GM12878 (cell line): ENCODE measurements at regions of chr2 and their contacts with region 1.

Region 1: DNA sequence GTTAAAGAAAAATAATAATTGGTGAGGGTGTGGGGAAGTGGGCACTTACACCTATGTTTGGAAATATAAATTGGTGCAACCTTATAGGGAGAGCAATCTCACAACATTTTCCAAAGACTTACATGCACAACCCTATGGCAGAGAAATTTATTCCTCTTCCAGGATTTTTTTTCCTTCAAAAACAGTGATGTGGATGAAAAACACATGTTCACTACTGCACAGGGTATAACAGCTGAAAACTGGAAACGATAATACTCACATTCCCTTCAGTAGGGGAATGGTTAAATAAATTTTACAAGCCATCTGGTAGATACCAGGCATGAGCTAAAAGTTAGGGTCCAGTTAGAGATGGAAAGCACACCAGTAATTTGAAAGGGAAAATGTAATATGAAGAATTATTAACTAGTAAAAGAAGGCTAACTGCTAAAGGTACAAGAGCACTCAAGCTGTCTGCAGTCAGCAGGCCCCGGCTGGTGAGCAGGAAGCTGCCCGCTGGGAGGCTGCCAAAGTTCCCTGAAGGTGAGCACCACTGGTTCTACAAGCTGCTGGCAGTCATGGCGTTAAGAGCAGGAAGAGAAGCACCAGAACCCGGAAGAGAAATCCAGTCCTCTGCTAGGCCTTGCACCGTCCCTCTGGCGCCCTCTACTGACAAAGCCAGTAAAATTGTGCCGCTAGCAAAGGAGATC is 28.4 kb upstream of the CASP8 start:
- DNase-seq: peak; percentile 80
- ATAC-seq: peak; percentile 72
- H3K4me3 ChIP-seq: no peak overlapping the region
- H3K27ac ChIP-seq: peak overlapping the region; percentile 55
- H3K4me1 ChIP-seq: peaks cover 20% of the 10 kb centered on the region
- H3K27me3 ChIP-seq: no peaks in the 10 kb centered on the region
- CTCF ChIP-seq: peak; percentile 92 to 98 (median 95); a peak in 5 of 6 replicates
- EP300 ChIP-seq: no peak
- POLR2A ChIP-seq: peak; percentile 76
- RAD21 ChIP-seq: peak; percentile 98

Region 2: DNA sequence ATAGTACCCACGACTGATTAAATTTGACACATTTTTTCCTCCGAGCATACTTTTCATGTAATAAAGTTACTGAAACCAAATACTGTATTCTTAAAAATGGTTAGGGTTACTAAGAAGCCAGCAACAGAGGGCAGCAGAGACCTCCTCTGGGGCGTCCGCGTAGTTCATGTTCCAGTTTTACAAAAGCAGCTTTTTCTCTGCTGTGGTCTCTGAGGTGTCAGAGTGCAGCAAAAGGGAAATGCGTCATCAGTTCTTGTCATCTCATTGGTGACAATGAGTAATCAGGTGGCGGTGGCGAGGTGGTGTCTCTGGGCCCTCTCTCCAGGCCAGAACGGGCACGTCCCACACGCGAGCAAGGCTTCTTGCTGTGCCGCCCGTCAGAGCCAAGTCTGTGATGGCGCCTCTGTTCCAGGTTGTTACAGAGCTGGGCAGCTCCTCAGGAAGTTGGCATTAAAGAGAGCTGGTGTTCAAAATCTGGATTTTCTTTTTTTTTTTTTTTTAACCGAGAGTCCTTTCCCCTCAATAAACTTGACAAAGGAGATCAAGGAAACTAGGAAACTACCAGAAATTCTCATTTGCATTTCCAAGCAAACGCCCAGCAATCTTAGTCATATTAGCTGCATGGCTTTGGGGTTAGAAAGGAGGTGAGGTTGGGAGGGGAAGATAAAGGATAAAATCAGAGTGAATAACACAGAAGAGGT is 518.8 kb before region 1 on chr2:
- CTCF ChIA-PET with region 1: interaction called, 24 read pairs
- POLR2A ChIA-PET with region 1: interaction called, 3 read pairs
- RAD21 ChIA-PET with region 1: interaction called, 12 read pairs
- SMC1A ChIA-PET with region 1: interaction called, 11 read pairs
- in situ Hi-C with region 1: no loop called
- intact Hi-C with region 1: loop called (anchors 5 kb)
- DNase-seq: peak; percentile 98
- ATAC-seq: peak; percentile 99
- H3K4me3 ChIP-seq: no peak overlapping the region
- H3K27ac ChIP-seq: peak overlapping the region; percentile 82
- H3K4me1 ChIP-seq: peaks cover 7% of the 10 kb centered on the region
- H3K27me3 ChIP-seq: no peaks in the 10 kb centered on the region
- CTCF ChIP-seq: peak; percentile 75 to 94 (median 80)
- EP300 ChIP-seq: peak; percentile 85 to 94; a peak in 3 of 4 replicates
- POLR2A ChIP-seq: peak; percentile 98
- RAD21 ChIP-seq: peak; percentile 95

Region 3: DNA sequence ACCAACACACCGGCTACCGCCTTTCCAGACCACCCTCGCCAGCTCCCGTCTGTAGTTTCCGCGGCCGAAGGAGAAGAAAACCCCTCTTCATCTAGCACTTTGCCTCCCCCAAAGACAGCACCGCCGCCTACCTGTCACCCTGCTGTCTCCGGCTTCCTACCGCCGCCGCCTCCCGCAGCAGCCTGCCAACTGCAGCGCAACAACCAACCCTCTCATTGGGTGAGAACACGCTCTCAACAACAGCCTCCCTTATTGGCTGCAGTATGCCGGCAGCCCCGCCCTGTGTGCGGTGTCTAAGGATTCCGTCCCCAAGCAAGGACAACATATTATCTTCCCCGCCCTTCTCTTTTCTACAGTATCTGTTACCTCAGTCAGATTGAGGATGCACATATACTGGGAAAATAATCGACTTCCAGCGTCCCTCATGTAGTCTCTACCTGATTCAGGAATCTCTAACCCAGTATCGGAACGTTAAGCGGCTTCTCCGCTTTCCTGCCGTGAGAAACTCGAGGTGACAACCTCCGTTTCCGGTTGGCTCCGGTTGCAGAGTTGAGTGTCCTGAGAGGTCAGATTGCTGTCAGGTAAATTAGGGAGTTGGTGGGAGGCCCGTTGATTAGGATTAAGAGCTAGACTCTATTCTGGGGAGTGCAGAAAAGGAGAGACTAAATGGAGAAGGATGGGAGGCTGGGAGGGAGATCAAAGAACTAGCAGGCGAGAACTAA is 160.3 kb before region 1 on chr2 and contains the starts of genes HYCC2 and NDUFB3:
- CTCF ChIA-PET with region 1: interaction called, 25 read pairs
- POLR2A ChIA-PET with region 1: no interaction called
- RAD21 ChIA-PET with region 1: interaction called, 36 read pairs
- SMC1A ChIA-PET with region 1: interaction called, 35 read pairs
- in situ Hi-C with region 1: no loop called
- intact Hi-C with region 1: loop called (anchors 1 kb)
- DNase-seq: peak; percentile 95
- ATAC-seq: peak; percentile 97
- H3K4me3 ChIP-seq: peak within 1 kb of the TSS; percentile 80
- H3K27ac ChIP-seq: peak within 1 kb of the TSS; percentile 92
- H3K4me1 ChIP-seq: peaks cover 23% of the 10 kb centered on the region
- H3K27me3 ChIP-seq: no peaks in the 10 kb centered on the region
- CTCF ChIP-seq: peak in 2 of 3 experiments; percentile 28 to 43; a peak in 3 of 6 replicates
- EP300 ChIP-seq: 0 out of 4 replicates have a peak, but pooled peaks of 1 of the 2 experiments have one; percentile 13
- POLR2A ChIP-seq: peak; percentile 91
- RAD21 ChIP-seq: no peak
- polyA plus RNA-seq, gene HYCC2: 3.4 to 6.8 TPM
- polyA plus RNA-seq, gene NDUFB3: 1,005 to 1,059 TPM

Region 4: DNA sequence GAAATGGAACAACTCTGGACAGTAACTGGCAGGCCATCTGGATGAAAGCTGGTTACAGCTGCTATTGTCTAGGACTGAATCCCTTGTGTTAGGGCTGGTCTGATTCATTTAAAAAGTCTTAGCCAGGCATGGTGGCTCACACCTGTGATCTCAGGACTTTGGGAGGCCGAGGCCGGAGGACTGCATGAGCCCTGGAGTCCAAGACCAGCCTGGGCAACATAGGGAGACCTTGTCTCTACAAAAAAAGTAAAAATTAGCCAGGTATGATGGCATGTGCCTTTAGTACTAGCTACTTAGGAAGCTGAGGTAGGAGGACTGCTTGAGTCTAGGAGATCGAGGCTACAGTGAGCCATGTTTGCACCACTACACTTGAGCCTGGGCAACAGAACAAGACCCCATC is 131.4 kb before region 1 on chr2:
- CTCF ChIA-PET with region 1: no interaction called
- POLR2A ChIA-PET with region 1: no interaction called
- RAD21 ChIA-PET with region 1: no interaction called
- SMC1A ChIA-PET with region 1: no interaction called
- in situ Hi-C with region 1: no loop called
- intact Hi-C with region 1: no loop called
- DNase-seq: no peak
- ATAC-seq: no peak
- H3K4me3 ChIP-seq: no peak overlapping the region
- H3K27ac ChIP-seq: no peak overlapping the region
- H3K4me1 ChIP-seq: no peaks in the 10 kb centered on the region
- H3K27me3 ChIP-seq: no peaks in the 10 kb centered on the region
- CTCF ChIP-seq: no peak
- EP300 ChIP-seq: no peak
- POLR2A ChIP-seq: no peak
- RAD21 ChIP-seq: no peak

Region 5: DNA sequence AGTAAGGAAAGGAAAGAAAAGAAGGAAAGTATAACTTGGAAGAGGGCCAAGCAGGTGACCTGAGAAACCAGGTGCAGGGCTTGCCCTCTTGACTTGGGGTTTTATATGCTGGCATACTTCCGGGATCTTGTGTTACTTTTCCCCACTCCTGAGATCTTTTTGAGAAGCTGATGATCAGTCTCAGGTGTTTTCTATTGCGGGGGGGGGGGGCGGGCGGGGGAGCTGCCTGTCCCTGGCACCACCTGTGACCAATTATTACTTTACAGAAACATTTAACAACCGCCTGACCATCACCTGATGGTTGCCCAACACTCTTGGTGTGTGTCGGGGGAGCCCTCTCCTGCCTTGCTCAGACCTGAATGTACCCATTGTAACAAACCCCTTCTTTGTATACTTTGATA is 55.8 kb before region 1 on chr2:
- CTCF ChIA-PET with region 1: interaction called, 390 read pairs
- POLR2A ChIA-PET with region 1: interaction called, 5 read pairs
- RAD21 ChIA-PET with region 1: interaction called, 279 read pairs
- SMC1A ChIA-PET with region 1: interaction called, 285 read pairs
- in situ Hi-C with region 1: no loop called
- intact Hi-C with region 1: no loop called
- DNase-seq: no peak
- ATAC-seq: no peak
- H3K4me3 ChIP-seq: no peak overlapping the region
- H3K27ac ChIP-seq: no peak overlapping the region
- H3K4me1 ChIP-seq: no peaks in the 10 kb centered on the region
- H3K27me3 ChIP-seq: no peaks in the 10 kb centered on the region
- CTCF ChIP-seq: no peak
- EP300 ChIP-seq: no peak
- POLR2A ChIP-seq: no peak
- RAD21 ChIP-seq: no peak

Region 6: DNA sequence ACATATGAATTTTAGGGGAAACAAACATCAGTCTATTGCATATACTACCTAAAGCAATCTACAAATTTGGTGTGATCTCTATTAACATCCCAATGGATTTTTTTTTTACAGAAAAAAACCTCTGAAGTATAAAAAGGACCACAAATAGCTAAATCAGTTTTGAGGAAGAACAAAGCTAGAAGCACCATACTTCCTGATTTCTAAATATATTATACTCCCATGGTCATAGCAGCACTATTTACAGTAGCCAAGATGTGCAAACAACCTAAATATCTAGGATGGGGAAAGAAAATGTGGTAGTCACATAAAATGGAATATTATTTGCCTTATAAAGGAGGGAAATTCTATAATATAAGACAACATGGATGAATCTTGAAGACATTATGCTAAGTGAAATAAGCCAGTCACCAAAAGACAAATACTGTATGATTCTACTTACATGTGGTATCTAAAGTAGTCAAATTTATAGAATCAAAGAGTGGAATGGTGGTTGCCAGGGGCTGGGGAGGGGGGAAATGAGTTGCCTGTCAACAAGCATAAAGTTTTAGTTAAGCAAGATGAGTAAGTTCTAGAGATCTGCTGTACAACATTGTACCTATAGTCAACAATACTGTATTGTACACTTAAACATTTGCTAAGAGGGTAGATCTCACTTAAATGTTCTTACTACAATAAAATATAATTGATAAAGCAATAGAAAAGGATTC is 10.8 kb after region 1 on chr2:
- CTCF ChIA-PET with region 1: interaction called, 11 read pairs
- POLR2A ChIA-PET with region 1: interaction called, 3 read pairs
- RAD21 ChIA-PET with region 1: interaction called, 5 read pairs
- SMC1A ChIA-PET with region 1: interaction called, 9 read pairs
- in situ Hi-C with region 1: no loop called
- intact Hi-C with region 1: no loop called
- DNase-seq: no peak
- ATAC-seq: no peak
- H3K4me3 ChIP-seq: no peak overlapping the region
- H3K27ac ChIP-seq: no peak overlapping the region
- H3K4me1 ChIP-seq: no peaks in the 10 kb centered on the region
- H3K27me3 ChIP-seq: no peaks in the 10 kb centered on the region
- CTCF ChIP-seq: no peak
- EP300 ChIP-seq: no peak
- POLR2A ChIP-seq: no peak
- RAD21 ChIP-seq: no peak

Region 7: GRCh38 chr2:201275990-201276389 is 44.1 kb after region 1 on chr2:
- CTCF ChIA-PET with region 1: interaction called, 15 read pairs
- POLR2A ChIA-PET with region 1: interaction called, 3 read pairs
- RAD21 ChIA-PET with region 1: interaction called, 15 read pairs
- SMC1A ChIA-PET with region 1: interaction called, 14 read pairs
- in situ Hi-C with region 1: no loop called
- intact Hi-C with region 1: loop called (anchors 5 kb)
- DNase-seq: no peak
- ATAC-seq: peak; percentile 39; the same call in 2 of the 3 replicates
- H3K4me3 ChIP-seq: no peak overlapping the region
- H3K27ac ChIP-seq: no peak overlapping the region
- H3K4me1 ChIP-seq: no peaks in the 10 kb centered on the region
- H3K27me3 ChIP-seq: no peaks in the 10 kb centered on the region
- CTCF ChIP-seq: peak in 2 of 3 experiments; percentile 1 to 5; a peak in 1 of 6 replicates
- EP300 ChIP-seq: no peak
- POLR2A ChIP-seq: no peak
- RAD21 ChIP-seq: no peak

Region 8: GRCh38 chr2:201425952-201426351 is 194.0 kb after region 1 on chr2:
- CTCF ChIA-PET with region 1: no interaction called
- POLR2A ChIA-PET with region 1: no interaction called
- RAD21 ChIA-PET with region 1: no interaction called
- SMC1A ChIA-PET with region 1: no interaction called
- in situ Hi-C with region 1: no loop called
- intact Hi-C with region 1: no loop called
- DNase-seq: no peak
- ATAC-seq: no peak
- H3K4me3 ChIP-seq: no peak overlapping the region
- H3K27ac ChIP-seq: no peak overlapping the region
- H3K4me1 ChIP-seq: no peaks in the 10 kb centered on the region
- H3K27me3 ChIP-seq: no peaks in the 10 kb centered on the region
- CTCF ChIP-seq: no peak
- EP300 ChIP-seq: no peak
- POLR2A ChIP-seq: no peak
- RAD21 ChIP-seq: no peak

Region 9: GRCh38 chr2:201642579-201643215 is 410.8 kb after region 1 on chr2:
- CTCF ChIA-PET with region 1: interaction called, 6 read pairs
- POLR2A ChIA-PET with region 1: no interaction called
- RAD21 ChIA-PET with region 1: interaction called, 4 read pairs
- SMC1A ChIA-PET with region 1: no interaction called
- in situ Hi-C with region 1: no loop called
- intact Hi-C with region 1: loop called (anchors 2 kb)
- DNase-seq: peak; percentile 1
- ATAC-seq: peak; percentile 93
- H3K4me3 ChIP-seq: peak overlapping the region; percentile 94
- H3K27ac ChIP-seq: peak overlapping the region; percentile 85
- H3K4me1 ChIP-seq: no peaks in the 10 kb centered on the region
- H3K27me3 ChIP-seq: no peaks in the 10 kb centered on the region
- CTCF ChIP-seq: no peak
- EP300 ChIP-seq: 0 out of 4 replicates have a peak, but pooled peaks of 1 of the 2 experiments have one; percentile 17
- POLR2A ChIP-seq: peak; percentile 89
- RAD21 ChIP-seq: no peak